Left lung (tissue), 14 donors: ENCODE measurements at regions of chr7 and their contacts with region 1.

Region 1: DNA sequence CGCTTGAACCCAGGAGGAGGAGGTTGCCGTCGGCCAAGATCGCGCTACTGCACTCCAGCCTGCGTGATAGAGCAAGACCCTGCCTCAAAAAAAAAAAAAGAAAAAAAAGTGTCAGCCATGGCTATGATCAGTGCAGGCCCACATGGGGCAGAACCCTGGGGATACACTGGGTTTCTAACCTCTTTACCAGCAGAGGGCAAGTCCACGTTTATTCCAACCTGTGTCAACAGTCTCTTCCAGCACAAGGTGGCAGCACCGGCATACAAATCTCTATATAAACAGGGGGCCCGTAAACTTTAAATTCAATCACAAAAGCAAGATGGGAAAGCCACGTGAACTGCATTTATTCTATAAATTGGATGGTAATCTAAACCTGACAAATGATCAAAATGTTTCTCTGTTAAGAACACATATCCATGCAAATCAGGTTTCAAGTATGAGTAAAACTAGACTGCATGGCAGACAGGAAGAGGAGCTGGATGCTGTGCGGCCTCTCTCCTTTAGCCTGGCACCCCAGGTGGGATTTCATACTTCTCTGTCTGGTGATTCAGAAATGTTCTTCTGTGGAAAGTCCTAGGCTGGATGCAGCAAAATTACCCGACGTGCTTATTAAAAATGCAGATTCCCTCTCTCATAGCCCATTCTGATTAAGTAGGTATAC is 60.0 kb upstream of the STEAP1B start:
- DNase-seq: peak in 3 of 4 donors; percentile 65 to 86 (median 71)
- ATAC-seq: peak; percentile 79
- H3K4me3 ChIP-seq: no peak overlapping the region
- H3K27ac ChIP-seq: no peak overlapping the region
- H3K4me1 ChIP-seq: peaks cover 41 to 47% of the 10 kb centered on the region in 2 donors
- H3K27me3 ChIP-seq: peaks cover 0 to 13% of the 10 kb centered on the region in 2 donors
- CTCF ChIP-seq: peak; percentile 66 to 86

Region 2: DNA sequence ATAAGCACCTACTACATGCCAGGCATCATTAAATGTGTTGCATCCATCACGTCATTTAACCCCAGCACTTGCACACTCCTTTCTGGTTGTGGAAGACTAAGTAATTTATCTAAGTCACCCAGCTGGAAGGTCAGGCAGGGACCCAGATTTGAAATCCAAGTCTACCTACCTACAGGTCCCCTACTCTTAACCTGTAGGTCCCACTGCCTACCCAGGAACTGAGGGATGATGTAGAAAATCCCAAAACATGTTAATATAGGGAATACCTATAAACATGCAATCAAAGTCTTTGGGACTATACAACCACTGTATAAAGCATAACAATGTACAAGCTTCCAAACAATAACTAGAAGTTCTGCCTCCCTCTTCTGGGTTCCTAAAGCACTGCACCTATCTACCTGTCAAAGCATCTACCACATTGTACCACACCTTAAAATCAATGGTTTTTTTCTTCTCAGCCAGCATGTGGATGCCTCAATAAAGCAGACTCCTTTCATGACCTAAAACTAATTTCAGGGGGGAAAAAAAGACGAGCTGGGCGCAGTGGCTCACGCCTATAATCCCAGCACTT is 172.7 kb after region 1 on chr7:
- intact Hi-C with region 1: loop called in 1 of 2 experiments (anchors 5 kb)
- DNase-seq: no peak
- ATAC-seq: peak; percentile 41
- H3K4me3 ChIP-seq: no peak overlapping the region
- H3K27ac ChIP-seq: no peak overlapping the region
- H3K4me1 ChIP-seq: peaks cover 0 to 32% of the 10 kb centered on the region in 2 donors
- H3K27me3 ChIP-seq: peaks cover 0 to 4% of the 10 kb centered on the region in 2 donors
- CTCF ChIP-seq: no peak

Region 3: DNA sequence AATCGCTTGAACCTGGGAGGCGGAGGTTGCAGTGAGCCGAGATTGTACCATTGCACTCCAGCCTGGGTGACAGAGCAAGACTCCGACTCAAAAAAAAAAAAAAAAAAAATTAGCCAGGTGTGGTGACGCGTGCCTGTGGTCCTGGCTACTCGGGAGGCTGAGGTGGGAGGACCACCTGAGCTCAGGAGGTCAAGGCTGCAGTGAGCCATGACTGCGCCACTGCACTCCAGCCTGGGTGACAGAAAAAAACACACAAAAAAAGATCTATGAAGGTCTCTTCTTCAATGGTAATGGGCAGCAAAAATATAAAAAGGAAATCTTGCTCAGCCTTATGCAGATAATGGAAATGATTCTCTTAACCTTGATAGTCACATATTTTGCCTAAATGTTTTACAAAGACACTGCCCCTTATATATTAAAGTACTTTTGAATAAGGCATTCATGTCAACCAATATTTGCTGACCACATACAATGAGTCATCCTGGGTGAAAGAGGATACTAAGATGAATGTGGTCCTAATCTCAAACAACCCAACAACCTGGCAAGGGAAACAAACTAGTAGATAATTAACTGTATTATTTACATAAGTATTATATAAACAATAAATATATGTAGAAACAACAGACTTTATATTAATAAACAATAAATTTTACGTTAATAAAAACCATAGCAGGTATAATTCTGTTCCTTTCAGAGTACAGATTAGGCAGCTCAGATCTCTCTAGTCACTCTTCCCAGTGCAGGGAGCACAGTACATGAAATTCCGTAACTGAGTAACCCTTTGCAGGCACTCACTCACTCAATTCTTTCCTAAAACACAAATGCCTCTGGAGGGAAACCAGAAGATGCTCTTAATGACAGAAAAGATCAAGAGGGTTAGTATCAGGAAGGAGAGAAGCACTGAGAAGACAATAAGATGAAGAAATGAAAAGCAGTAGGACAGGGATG is 254.6 kb after region 1 on chr7:
- intact Hi-C with region 1: no loop called
- DNase-seq: no peak
- ATAC-seq: no peak
- H3K4me3 ChIP-seq: no peak overlapping the region
- H3K27ac ChIP-seq: no peak overlapping the region
- H3K4me1 ChIP-seq: peaks cover 0 to 2% of the 10 kb centered on the region in 2 donors
- H3K27me3 ChIP-seq: no peaks in the 10 kb centered on the region
- CTCF ChIP-seq: no peak

Region 4: DNA sequence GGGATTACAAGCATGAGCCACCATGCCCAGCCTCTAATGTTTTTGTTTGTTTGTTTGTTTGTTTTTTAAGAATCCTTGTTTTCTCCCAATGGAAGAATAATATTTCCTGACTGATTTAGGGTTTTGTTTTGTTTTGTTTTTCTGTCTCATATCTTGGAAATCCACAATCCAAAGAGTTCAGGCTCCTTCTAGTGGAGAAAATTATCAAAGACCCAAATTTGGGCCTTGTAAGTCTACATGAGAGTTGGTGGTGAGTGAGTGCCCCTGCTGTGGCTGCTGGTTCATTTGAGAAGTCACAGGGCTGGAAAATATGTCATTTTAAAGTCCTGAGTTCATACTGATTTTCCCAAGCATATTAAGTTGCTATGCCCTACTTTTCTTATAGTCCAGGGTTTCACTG is 512.1 kb after region 1 on chr7:
- intact Hi-C with region 1: loop called in 1 of 2 experiments (anchors 5 kb)
- DNase-seq: peak in 1 of 4 donors; percentile 31
- ATAC-seq: no peak
- H3K4me3 ChIP-seq: no peak overlapping the region
- H3K27ac ChIP-seq: no peak overlapping the region
- H3K4me1 ChIP-seq: no peaks in the 10 kb centered on the region
- H3K27me3 ChIP-seq: no peaks in the 10 kb centered on the region
- CTCF ChIP-seq: peak in 1 of 2 donors; percentile 14